ENCODE measurements at regions of chr2 and their contacts with region 1.

Region 1: GRCh38 chr2:197113275-197113711 is 186.8 kb upstream of the PGAP1 start:
- DNase-seq: no peak
- ATAC-seq: peak; percentile 41
- H3K4me3 Mint-ChIP-seq: no peak overlapping the region
- H3K27ac Mint-ChIP-seq: peak overlapping the region; percentile 26
- H3K4me1 Mint-ChIP-seq: peaks cover 25% of the 10 kb centered on the region
- H3K27me3 Mint-ChIP-seq: no peaks in the 10 kb centered on the region

Region 2: DNA sequence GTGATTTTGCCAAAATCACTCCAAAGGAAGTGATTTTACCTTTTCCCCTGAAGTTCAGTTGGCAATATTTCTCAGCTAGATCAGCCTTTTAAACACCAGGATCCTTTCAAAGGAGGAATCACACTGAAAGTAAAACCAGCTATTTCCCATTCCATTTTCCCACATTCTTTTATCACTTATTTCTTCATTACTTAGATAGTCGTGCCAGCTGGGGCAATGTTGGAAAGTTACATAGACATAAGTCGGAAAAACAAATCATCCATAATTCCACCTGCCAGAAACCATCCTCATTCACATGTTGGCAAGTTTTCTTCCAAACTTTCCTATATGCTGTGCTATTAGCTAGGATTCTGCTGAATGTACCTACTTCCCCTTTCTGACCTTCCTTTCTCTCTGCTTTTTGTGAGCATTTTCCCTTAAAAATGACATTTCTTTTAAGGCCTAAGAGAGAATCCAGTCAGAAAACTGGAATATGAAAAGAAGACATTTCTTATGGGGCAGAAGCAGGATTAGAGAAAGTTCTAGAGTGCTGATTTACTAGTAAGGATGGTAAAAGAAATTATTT is 771.9 kb before region 1 on chr2:
- CTCF ChIA-PET with region 1: no interaction called
- POLR2A ChIA-PET with region 1: no interaction called
- intact Hi-C with region 1: no loop called
- DNase-seq: no peak
- ATAC-seq: no peak
- H3K4me3 Mint-ChIP-seq: no peak overlapping the region
- H3K27ac Mint-ChIP-seq: no peak overlapping the region
- H3K4me1 Mint-ChIP-seq: peaks cover 4% of the 10 kb centered on the region
- H3K27me3 Mint-ChIP-seq: no peaks in the 10 kb centered on the region

Region 3: DNA sequence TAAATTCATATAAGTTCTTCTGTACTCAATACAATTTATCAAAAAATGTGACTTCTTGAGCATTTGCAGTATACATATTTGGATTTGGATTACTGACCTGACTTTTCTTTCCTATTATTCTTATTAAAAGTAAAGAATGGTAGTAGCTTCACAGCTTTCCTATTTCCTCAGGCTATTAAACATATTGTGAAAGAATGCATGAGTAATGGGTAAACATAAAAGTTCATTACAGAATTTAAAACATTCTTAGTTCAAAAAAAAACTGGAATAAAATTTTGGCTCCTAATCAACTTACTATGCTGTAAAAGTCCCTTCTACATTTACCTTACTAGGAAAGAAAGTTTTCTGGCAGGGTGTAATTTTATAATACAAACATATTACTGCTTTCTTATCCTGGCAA is 276.9 kb before region 1 on chr2:
- CTCF ChIA-PET with region 1: no interaction called
- POLR2A ChIA-PET with region 1: no interaction called
- intact Hi-C with region 1: no loop called
- DNase-seq: no peak
- ATAC-seq: no peak
- H3K4me3 Mint-ChIP-seq: no peak overlapping the region
- H3K27ac Mint-ChIP-seq: no peak overlapping the region
- H3K4me1 Mint-ChIP-seq: no peaks in the 10 kb centered on the region
- H3K27me3 Mint-ChIP-seq: no peaks in the 10 kb centered on the region

Region 4: DNA sequence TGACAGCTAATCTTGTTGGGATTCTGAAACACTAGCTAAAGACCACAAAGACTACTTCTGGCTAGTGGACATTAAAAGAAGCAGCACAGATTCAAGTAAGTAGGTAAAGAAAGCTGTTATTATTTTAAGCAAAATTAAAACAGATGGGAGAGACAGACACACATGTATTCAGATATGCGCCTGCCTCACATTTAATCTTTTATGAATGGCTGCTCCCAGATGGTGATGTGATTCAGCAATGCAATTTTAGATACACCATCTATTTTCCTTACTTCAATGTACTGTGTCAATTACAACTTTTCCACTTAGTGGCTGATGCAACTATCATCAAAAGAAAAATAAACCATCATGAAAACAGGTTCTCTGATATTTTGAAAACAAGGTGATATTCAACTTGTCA is 53.8 kb before region 1 on chr2:
- CTCF ChIA-PET with region 1: no interaction called
- POLR2A ChIA-PET with region 1: no interaction called
- intact Hi-C with region 1: no loop called
- DNase-seq: no peak
- ATAC-seq: no peak
- H3K4me3 Mint-ChIP-seq: no peak overlapping the region
- H3K27ac Mint-ChIP-seq: peak overlapping the region; percentile 13
- H3K4me1 Mint-ChIP-seq: peaks cover 22% of the 10 kb centered on the region
- H3K27me3 Mint-ChIP-seq: no peaks in the 10 kb centered on the region

Region 5: DNA sequence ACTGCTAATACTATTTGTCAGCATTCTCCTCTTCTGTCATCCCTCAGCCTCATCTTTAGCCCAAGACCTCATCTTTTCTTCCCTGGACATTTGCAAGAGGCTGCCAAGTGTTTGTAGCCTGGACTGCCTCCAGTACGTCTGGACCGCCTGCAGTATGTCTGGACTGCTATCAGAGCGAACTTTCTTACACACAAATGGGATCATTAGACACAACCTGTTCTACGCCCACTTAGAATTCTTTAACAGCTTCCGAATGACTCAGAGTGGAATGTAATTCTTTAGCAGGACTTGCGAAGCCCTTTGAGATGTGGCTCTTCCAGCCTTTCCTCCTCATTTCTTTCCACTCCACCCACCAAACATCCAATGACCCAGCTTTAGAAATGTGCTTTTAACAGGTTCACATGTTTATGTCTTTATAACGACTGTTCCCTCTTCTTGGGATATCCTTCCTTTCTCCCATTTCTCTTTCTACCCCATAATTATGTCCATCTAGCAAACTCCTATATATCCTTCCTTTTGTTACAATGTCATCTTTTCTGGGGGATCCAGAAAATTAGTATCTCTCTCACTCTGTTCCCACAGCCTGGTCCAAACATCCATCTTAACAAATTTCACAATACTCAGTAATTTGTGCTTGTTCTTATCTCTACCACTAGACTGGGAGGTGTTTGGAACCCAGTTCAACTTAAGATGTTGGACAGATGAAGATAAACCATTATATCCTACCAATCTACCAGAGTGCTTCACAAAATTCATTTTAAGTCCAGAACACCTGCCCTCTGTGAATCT is 15.5 kb before region 1 on chr2:
- CTCF ChIA-PET with region 1: interaction called, 11 read pairs
- POLR2A ChIA-PET with region 1: no interaction called
- intact Hi-C with region 1: no loop called
- DNase-seq: no peak
- ATAC-seq: no peak
- H3K4me3 Mint-ChIP-seq: no peak overlapping the region
- H3K27ac Mint-ChIP-seq: no peak overlapping the region
- H3K4me1 Mint-ChIP-seq: peaks cover 5% of the 10 kb centered on the region
- H3K27me3 Mint-ChIP-seq: no peaks in the 10 kb centered on the region

Region 6: DNA sequence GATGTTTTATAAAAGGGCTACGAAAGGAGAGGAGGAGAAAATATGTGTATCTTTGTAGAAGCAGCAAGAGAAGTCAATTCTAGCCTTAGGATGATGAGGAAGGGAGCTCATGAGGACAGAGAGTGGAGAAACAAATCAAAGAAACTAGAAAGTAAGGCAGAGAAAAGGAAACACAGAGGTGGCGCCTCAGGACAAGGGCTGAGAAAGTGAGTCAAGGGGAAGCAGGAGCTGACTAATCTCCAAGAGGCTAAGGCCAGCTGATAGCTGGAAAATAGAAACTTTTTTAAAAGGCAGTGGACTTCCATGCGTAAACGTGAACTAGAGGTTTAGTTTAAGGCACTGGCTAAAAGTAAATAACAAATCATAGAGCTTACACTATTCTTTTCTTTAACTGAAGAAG is 23.9 kb after region 1 on chr2:
- CTCF ChIA-PET with region 1: interaction called, 15 read pairs
- POLR2A ChIA-PET with region 1: interaction called, 3 read pairs
- intact Hi-C with region 1: no loop called
- DNase-seq: peak; percentile 46
- ATAC-seq: peak; percentile 62
- H3K4me3 Mint-ChIP-seq: no peak overlapping the region
- H3K27ac Mint-ChIP-seq: peak overlapping the region; percentile 76
- H3K4me1 Mint-ChIP-seq: peaks cover 87% of the 10 kb centered on the region
- H3K27me3 Mint-ChIP-seq: no peaks in the 10 kb centered on the region

Region 7: DNA sequence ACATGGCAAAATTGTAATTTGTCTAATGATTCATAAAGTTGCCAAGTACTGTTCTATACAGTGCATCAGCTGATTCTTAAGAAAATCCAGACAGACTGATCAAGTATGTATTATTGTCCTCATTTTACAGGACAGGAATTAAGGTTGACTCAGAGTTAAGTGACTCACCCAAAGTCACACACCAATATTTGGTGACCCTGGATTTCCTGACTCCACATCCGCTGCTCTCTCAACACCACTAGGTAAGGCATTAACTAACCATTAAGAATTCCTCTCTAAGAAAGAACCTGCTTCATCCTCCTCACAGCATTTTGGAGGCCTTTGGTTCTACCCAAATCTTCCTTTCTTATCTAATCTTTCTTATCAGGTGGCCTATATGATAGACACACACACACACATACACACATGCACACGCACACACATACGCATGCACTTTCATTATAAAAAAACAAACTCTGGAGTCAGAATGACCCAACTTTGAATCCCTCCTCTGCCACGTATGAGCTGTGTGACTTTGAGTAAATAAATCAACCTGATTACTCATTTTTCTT is 46.4 kb after region 1 on chr2:
- CTCF ChIA-PET with region 1: interaction called, 14 read pairs
- POLR2A ChIA-PET with region 1: no interaction called
- intact Hi-C with region 1: no loop called
- DNase-seq: peak; percentile 50
- ATAC-seq: peak; percentile 85
- H3K4me3 Mint-ChIP-seq: peak overlapping the region; percentile 14
- H3K27ac Mint-ChIP-seq: peak overlapping the region; percentile 91
- H3K4me1 Mint-ChIP-seq: peaks cover 75% of the 10 kb centered on the region
- H3K27me3 Mint-ChIP-seq: no peaks in the 10 kb centered on the region

Region 8: DNA sequence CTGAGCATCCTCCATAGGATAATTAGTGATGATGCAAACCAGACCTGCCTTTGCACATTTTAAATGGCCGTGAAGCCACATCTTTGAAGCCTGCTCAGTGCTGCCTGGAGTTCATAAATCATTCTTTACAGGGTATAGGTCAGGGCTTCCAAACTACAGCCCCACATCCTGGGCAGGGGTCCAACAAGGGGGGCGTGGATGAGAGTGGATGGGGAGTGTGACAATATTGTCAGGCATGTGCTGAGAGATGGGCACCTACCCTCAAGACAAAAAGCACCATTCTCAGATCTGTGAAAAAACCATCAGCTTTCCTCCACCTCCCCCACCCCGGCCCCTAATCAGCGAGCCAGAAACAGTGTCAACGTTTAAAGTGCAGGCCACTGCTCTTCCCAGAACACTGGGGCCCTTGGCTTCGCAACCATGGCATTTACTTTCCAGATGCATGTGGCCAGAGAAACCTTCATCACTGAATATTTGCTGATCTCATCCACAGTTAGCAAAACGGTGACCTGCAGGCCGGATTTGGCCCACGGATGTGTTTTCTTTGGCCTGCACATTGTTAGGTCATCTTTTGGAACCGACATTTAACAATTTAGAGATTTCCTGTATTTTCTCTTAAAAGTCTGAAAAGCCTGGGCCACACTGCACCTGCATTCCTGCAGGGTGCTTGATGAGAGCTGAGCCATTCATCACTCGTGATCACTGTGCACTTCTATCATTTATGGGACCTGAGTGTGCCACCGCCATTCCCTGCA is 66.6 kb after region 1 on chr2:
- CTCF ChIA-PET with region 1: interaction called, 86 read pairs
- POLR2A ChIA-PET with region 1: no interaction called
- intact Hi-C with region 1: no loop called
- DNase-seq: no peak
- ATAC-seq: no peak
- H3K4me3 Mint-ChIP-seq: no peak overlapping the region
- H3K27ac Mint-ChIP-seq: peak overlapping the region; percentile 6
- H3K4me1 Mint-ChIP-seq: peaks cover 69% of the 10 kb centered on the region
- H3K27me3 Mint-ChIP-seq: no peaks in the 10 kb centered on the region

Region 9: GRCh38 chr2:197198890-197199289 is 85.6 kb after region 1 on chr2:
- CTCF ChIA-PET with region 1: interaction called, 18 read pairs
- POLR2A ChIA-PET with region 1: no interaction called
- intact Hi-C with region 1: no loop called
- DNase-seq: peak; percentile 93
- ATAC-seq: peak; percentile 93
- H3K4me3 Mint-ChIP-seq: peak overlapping the region; percentile 77
- H3K27ac Mint-ChIP-seq: peak overlapping the region; percentile 91
- H3K4me1 Mint-ChIP-seq: peaks cover 90% of the 10 kb centered on the region
- H3K27me3 Mint-ChIP-seq: no peaks in the 10 kb centered on the region

Region 10: DNA sequence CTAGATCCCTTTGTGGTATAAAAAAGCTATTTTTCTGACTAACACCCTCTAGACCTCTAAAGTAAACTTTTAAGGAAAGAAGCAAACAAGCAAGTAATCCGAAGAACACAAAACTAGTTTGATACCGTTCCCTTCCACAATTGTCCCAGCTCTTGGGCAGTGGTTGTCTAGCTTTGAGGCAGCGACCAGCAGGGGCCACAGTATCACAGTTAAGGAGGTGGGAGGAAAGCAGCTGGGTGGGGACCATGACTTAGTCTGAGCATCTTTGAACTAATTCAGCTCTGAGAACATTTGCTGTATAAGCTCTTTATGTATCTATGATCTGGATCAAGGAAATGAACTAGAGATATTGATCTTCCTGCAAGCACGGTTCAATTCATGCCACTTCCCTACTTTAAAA is 270.5 kb after region 1 on chr2:
- CTCF ChIA-PET with region 1: interaction called, 16 read pairs
- POLR2A ChIA-PET with region 1: no interaction called
- intact Hi-C with region 1: no loop called
- DNase-seq: no peak
- ATAC-seq: no peak
- H3K4me3 Mint-ChIP-seq: no peak overlapping the region
- H3K27ac Mint-ChIP-seq: no peak overlapping the region
- H3K4me1 Mint-ChIP-seq: peaks cover 8% of the 10 kb centered on the region
- H3K27me3 Mint-ChIP-seq: no peaks in the 10 kb centered on the region